Activated T-helper 1 cell treated with anti-CD3 and anti-CD28 coated beads, Interleukin-12 subunit alpha, Interleukin-12 subunit beta, Interleukin-2, Interleukin-4 antibody, amounts not matched to agents 30 ng/mL and 10 ng/mL and 1 ng/mL, durations not matched to agents 14 hours and 24 hours and 36 hours (primary cell): ENCODE measurements at regions of chr20 and their contacts with region 1.

Region 1: DNA sequence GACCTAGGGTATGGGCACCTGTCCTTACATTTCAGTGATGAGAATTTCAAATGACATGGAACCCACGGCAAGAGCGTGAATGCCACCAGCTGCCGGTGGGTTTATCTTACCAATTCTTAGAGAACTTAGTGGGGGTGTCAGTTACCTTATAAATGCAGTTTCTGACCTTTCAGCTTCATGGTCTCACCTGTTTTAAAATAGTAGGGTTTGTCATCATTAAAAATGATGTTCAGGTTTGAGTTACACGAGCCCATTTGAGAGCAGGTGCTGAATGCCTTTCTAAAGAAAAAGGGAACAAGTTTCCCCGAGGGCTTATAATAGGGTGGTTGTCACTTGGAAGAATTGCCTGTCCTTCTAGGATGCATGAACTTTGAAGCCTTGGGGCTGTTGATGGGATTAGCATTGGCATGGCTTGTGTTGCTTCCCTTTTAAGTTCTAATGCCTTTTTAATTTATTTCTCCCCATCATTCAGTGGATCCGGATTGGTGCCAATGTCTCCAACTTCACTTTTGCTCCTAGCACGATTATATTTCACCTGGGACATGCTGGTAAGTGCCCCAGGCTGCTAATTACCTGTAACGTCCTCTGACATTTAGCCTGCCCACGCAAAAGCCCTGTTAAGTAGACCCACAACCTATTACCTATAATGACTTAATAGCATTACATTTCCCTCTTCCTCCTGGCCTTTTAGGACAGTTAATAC is 27.9 kb downstream of the GHRH start:
- DNase-seq: no peak
- H3K4me3 Mint-ChIP-seq: no peak overlapping the region
- H3K27ac Mint-ChIP-seq: no peak overlapping the region
- H3K4me1 Mint-ChIP-seq: no peaks in the 10 kb centered on the region
- H3K27me3 Mint-ChIP-seq: no peaks in the 10 kb centered on the region

Region 2: DNA sequence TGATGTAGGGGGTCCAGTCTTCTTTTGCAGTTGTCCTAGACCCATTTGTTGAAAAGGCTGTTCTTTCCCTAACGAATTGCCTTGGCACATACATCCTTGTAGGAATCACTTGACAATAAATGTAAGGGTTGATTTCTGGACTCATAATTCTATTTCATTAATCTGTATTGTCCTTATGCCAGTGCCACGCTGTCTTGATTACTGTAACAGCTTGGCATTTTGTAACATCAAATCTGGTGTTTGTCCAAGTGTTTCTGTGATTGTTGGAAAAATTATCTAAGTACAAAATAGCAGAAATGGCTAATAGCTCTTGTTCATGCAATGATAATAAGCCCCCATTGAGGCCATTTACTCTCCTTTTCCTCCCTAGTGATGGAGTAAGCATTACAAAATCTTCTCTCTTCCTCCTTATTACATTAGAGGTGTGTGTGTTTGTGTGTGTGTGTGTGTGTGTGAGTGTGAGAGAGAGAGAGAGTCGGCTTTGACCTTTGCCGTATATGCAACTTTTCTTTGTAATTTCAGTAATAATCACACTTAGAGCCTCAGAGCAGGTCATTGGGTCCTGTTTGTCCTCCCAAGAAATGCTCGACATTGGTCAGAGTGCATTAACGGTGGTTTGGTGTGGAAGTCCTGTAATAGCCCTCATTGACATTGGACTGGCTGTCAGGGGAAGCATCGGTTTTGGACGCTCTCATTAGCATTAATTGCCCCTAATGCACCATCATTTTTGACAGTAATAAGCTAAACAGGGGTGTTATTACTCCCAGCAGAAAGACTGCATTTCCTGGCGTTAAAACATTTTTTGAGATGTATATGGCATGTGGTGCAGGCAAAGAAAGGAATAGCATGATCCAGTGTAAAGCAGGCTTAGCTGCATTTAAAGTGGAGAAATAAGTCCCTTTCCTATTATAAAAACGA is 13.7 kb before region 1 on chr20:
- intact Hi-C with region 1: loop called (anchors 2 kb)
- DNase-seq: no peak
- H3K4me3 Mint-ChIP-seq: no peak overlapping the region
- H3K27ac Mint-ChIP-seq: no peak overlapping the region
- H3K4me1 Mint-ChIP-seq: peaks cover 13% of the 10 kb centered on the region
- H3K27me3 Mint-ChIP-seq: no peaks in the 10 kb centered on the region

Region 3: GRCh38 chr20:37396416-37397075 is 162.8 kb after region 1 on chr20:
- intact Hi-C with region 1: no loop called
- DNase-seq: no peak
- H3K4me3 Mint-ChIP-seq: no peak overlapping the region
- H3K27ac Mint-ChIP-seq: no peak overlapping the region
- H3K4me1 Mint-ChIP-seq: no peaks in the 10 kb centered on the region
- H3K27me3 Mint-ChIP-seq: no peaks in the 10 kb centered on the region